Naive thymus-derived CD4-positive, alpha-beta T cell (primary cell): ENCODE measurements at regions of chr14 and their contacts with region 1.

Region 1: GRCh38 chr14:24673534-24674203 is 39.7 kb upstream of the GZMB start:
- DNase-seq: peak in 8 of 9 donors; percentile 48 to 72 (median 60)
- ATAC-seq: peak; percentile 90
- H3K4me3 ChIP-seq: peak overlapping the region; percentile 49
- H3K4me3 Mint-ChIP-seq: peak overlapping the region; percentile 74 to 92 (median 86)
- H3K27ac ChIP-seq: peak overlapping the region; percentile 51
- H3K27ac Mint-ChIP-seq: peak overlapping the region; percentile 72 to 95 (median 89)
- H3K4me1 ChIP-seq: peaks cover 30 to 43% of the 10 kb centered on the region in 2 donors
- H3K4me1 Mint-ChIP-seq: peaks cover 36 to 81% (median 59%) of the 10 kb centered on the region in 7 donors
- H3K27me3 ChIP-seq: no peaks in the 10 kb centered on the region
- H3K27me3 Mint-ChIP-seq: no peaks in the 10 kb centered on the region

Region 2: DNA sequence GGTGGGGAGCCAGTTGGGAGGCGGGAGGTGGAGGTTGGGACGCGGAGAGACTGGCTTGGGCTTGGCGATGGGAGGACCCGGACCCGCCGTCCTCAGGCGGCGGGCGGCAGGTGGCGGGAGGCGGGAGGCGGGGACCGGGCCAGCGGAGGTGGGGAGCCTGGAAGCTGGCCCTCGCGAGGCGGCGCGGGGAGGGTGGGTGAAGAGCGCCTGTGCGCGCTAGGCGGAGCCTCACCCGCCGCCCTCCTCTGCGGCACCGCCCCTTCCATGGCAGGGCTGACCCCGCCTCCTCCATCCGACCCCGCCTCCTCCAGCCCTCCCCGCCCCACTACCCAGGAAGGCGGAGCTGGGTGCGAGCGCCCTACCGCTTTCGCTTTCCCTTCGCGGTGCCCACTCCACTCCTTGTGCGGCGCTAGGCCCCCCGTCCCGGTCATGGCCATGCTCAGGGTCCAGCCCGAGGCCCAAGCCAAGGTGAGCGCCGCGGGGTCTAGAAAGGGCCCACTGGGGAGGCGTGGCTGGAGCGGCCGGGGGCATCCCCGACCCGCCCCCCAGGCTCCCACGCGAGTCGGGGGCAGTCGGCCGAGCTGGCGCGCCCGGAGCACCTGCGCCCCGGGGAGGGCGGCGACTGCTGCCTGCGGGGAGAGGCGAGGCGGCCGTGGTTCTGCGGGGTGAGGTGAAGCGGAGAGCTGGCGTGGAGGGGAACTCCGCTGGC is 537.7 kb before region 1 on chr14 and contains the start of gene PSME1:
- CTCF ChIA-PET with region 1: no interaction called
- POLR2A ChIA-PET with region 1: no interaction called
- intact Hi-C with region 1: no loop called
- DNase-seq: peak; percentile 88 to 97 (median 92)
- ATAC-seq: peak; percentile 99
- H3K4me3 ChIP-seq: peak within 1 kb of the TSS; percentile 83
- H3K4me3 Mint-ChIP-seq: peak within 1 kb of the TSS; percentile 88 to 95 (median 92)
- H3K27ac ChIP-seq: peak within 1 kb of the TSS; percentile 97
- H3K27ac Mint-ChIP-seq: peak within 1 kb of the TSS; percentile 86 to 98 (median 93)
- H3K4me1 ChIP-seq: peaks cover 16 to 37% of the 10 kb centered on the region in 2 donors
- H3K4me1 Mint-ChIP-seq: peaks cover 48 to 71% (median 64%) of the 10 kb centered on the region in 7 donors
- H3K27me3 ChIP-seq: no peaks in the 10 kb centered on the region
- H3K27me3 Mint-ChIP-seq: no peaks in the 10 kb centered on the region
- total RNA-seq, gene PSME1: 189 to 583 (median 202) TPM

Region 3: DNA sequence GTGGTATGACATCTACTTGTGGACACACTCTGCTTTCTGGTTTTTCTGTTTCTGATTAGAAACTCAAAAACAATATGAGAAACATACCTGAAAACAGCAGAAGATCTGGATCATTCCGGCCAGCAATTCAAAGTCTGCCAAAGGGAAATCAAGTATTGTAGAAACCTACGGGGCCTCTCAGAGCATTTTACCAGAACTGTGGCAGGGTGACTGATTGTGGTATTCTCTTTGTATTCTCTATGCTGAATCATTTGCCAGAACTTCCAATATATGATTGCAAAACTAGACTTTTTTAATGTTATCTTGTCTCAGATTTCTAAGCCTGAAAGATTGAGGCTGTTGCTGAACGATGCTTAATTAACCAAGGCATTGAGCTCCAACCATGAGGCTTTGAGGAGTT is 33.8 kb before region 1 on chr14:
- CTCF ChIA-PET with region 1: no interaction called
- POLR2A ChIA-PET with region 1: no interaction called
- intact Hi-C with region 1: no loop called
- DNase-seq: no peak
- ATAC-seq: no peak
- H3K4me3 ChIP-seq: no peak overlapping the region
- H3K4me3 Mint-ChIP-seq: no peak overlapping the region
- H3K27ac ChIP-seq: no peak overlapping the region
- H3K27ac Mint-ChIP-seq: no peak overlapping the region
- H3K4me1 ChIP-seq: no peaks in the 10 kb centered on the region
- H3K4me1 Mint-ChIP-seq: peaks cover 0 to 30% (median 6%) of the 10 kb centered on the region in 7 donors
- H3K27me3 ChIP-seq: no peaks in the 10 kb centered on the region
- H3K27me3 Mint-ChIP-seq: no peaks in the 10 kb centered on the region

Region 4: GRCh38 chr14:24690492-24690891 is 16.8 kb after region 1 on chr14:
- CTCF ChIA-PET with region 1: no interaction called
- POLR2A ChIA-PET with region 1: no interaction called
- intact Hi-C with region 1: loop called in 1 of 2 experiments (anchors 1 kb)
- DNase-seq: no peak
- ATAC-seq: no peak
- H3K4me3 ChIP-seq: no peak overlapping the region
- H3K4me3 Mint-ChIP-seq: no peak overlapping the region
- H3K27ac ChIP-seq: no peak overlapping the region
- H3K27ac Mint-ChIP-seq: no peak overlapping the region
- H3K4me1 ChIP-seq: peaks cover 0 to 45% of the 10 kb centered on the region in 2 donors
- H3K4me1 Mint-ChIP-seq: peaks cover 11 to 44% (median 12%) of the 10 kb centered on the region in 7 donors
- H3K27me3 ChIP-seq: no peaks in the 10 kb centered on the region
- H3K27me3 Mint-ChIP-seq: peaks cover 2 to 10% (median 4%) of the 10 kb centered on the region in 5 donors